T-cell (primary cell): ENCODE measurements at regions of chr1 and their contacts with region 1.

Region 1: GRCh38 chr1:172380441-172381244 is 39.8 kb upstream of the C1orf105 start:
- DNase-seq: peak in 27 of 35 experiments; percentile 6 to 78 (median 31)
- ATAC-seq: peak; percentile 93 to 98 (median 96)
- H3K4me3 ChIP-seq: peak overlapping the region in 1 of 2 donors; percentile 16
- H3K4me3 Mint-ChIP-seq: peak overlapping the region; percentile 49 to 66 (median 59)
- H3K27ac ChIP-seq: peak overlapping the region; percentile 89
- H3K27ac Mint-ChIP-seq: peak overlapping the region; percentile 94 to 98
- H3K4me1 ChIP-seq: peaks cover 0 to 30% of the 10 kb centered on the region in 2 experiments
- H3K4me1 Mint-ChIP-seq: peaks cover 28 to 46% (median 33%) of the 10 kb centered on the region in 3 donors
- H3K27me3 ChIP-seq: no peaks in the 10 kb centered on the region
- H3K27me3 Mint-ChIP-seq: no peaks in the 10 kb centered on the region

Region 2: DNA sequence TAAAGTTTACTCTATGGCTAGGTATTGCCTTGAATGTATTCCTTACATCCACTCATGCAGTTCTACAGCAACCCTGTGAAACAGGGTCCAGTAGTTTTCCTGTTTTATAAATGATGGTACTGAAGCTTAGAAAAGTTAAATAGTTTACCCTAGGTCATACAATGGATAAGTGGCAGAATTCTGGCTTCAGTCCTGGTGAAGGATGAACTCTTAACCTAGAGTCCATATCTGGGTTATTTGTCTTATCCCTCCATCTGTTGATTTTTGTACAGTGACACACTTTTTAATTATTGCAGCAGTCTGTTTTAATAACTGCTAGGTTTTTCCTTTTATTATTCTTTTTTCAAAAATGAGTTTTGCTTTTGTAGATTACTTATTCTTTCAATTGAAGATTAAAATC is 275.4 kb before region 1 on chr1:
- CTCF ChIA-PET with region 1: no interaction called
- POLR2A ChIA-PET with region 1: no interaction called
- DNase-seq: no peak
- ATAC-seq: no peak
- H3K4me3 ChIP-seq: no peak overlapping the region
- H3K4me3 Mint-ChIP-seq: no peak overlapping the region
- H3K27ac ChIP-seq: no peak overlapping the region
- H3K27ac Mint-ChIP-seq: no peak overlapping the region
- H3K4me1 ChIP-seq: no peaks in the 10 kb centered on the region
- H3K4me1 Mint-ChIP-seq: no peaks in the 10 kb centered on the region
- H3K27me3 ChIP-seq: no peaks in the 10 kb centered on the region
- H3K27me3 Mint-ChIP-seq: peaks cover 0 to 6% of the 10 kb centered on the region in 2 donors

Region 3: GRCh38 chr1:172338295-172338735 is 42.3 kb before region 1 on chr1:
- CTCF ChIA-PET with region 1: no interaction called
- POLR2A ChIA-PET with region 1: no interaction called
- DNase-seq: no peak
- ATAC-seq: peak in 1 of 4 experiments; percentile 47
- H3K4me3 ChIP-seq: no peak overlapping the region
- H3K4me3 Mint-ChIP-seq: no peak overlapping the region
- H3K27ac ChIP-seq: no peak overlapping the region
- H3K27ac Mint-ChIP-seq: no peak overlapping the region
- H3K4me1 ChIP-seq: peaks cover 0 to 4% of the 10 kb centered on the region in 2 experiments
- H3K4me1 Mint-ChIP-seq: peaks cover 12 to 16% (median 12%) of the 10 kb centered on the region in 3 donors
- H3K27me3 ChIP-seq: no peaks in the 10 kb centered on the region
- H3K27me3 Mint-ChIP-seq: no peaks in the 10 kb centered on the region

Region 4: GRCh38 chr1:172357753-172358385 is 22.8 kb before region 1 on chr1:
- CTCF ChIA-PET with region 1: interaction called, 5 to 30 read pairs
- POLR2A ChIA-PET with region 1: interaction called, 4 to 5 read pairs
- DNase-seq: peak in 4 of 35 experiments; percentile 0 to 31 (median 3)
- ATAC-seq: peak; percentile 5 to 30 (median 14)
- H3K4me3 ChIP-seq: peak overlapping the region in 1 of 2 donors; percentile 2
- H3K4me3 Mint-ChIP-seq: peak overlapping the region; percentile 42 to 67 (median 56)
- H3K27ac ChIP-seq: peak overlapping the region; percentile 63
- H3K27ac Mint-ChIP-seq: peak overlapping the region; percentile 91 to 97
- H3K4me1 ChIP-seq: peaks cover 24 to 26% of the 10 kb centered on the region in 2 experiments
- H3K4me1 Mint-ChIP-seq: peaks cover 57 to 58% (median 58%) of the 10 kb centered on the region in 3 donors
- H3K27me3 ChIP-seq: no peaks in the 10 kb centered on the region
- H3K27me3 Mint-ChIP-seq: no peaks in the 10 kb centered on the region

Region 5: GRCh38 chr1:172466795-172467407 is 86.3 kb after region 1 on chr1:
- CTCF ChIA-PET with region 1: no interaction called
- POLR2A ChIA-PET with region 1: no interaction called
- DNase-seq: no peak
- ATAC-seq: no peak
- H3K4me3 ChIP-seq: no peak overlapping the region
- H3K4me3 Mint-ChIP-seq: no peak overlapping the region
- H3K27ac ChIP-seq: no peak overlapping the region
- H3K27ac Mint-ChIP-seq: no peak overlapping the region
- H3K4me1 ChIP-seq: no peaks in the 10 kb centered on the region
- H3K4me1 Mint-ChIP-seq: no peaks in the 10 kb centered on the region
- H3K27me3 ChIP-seq: no peaks in the 10 kb centered on the region
- H3K27me3 Mint-ChIP-seq: peaks cover 0 to 5% of the 10 kb centered on the region in 2 donors